ENCODE measurements at regions of chr3 and their contacts with region 1.

Region 1: GRCh38 chr3:192331749-192332385 is 395.5 kb downstream of the FGF12 start:
- DNase-seq: no peak
- ATAC-seq: no peak

Region 2: DNA sequence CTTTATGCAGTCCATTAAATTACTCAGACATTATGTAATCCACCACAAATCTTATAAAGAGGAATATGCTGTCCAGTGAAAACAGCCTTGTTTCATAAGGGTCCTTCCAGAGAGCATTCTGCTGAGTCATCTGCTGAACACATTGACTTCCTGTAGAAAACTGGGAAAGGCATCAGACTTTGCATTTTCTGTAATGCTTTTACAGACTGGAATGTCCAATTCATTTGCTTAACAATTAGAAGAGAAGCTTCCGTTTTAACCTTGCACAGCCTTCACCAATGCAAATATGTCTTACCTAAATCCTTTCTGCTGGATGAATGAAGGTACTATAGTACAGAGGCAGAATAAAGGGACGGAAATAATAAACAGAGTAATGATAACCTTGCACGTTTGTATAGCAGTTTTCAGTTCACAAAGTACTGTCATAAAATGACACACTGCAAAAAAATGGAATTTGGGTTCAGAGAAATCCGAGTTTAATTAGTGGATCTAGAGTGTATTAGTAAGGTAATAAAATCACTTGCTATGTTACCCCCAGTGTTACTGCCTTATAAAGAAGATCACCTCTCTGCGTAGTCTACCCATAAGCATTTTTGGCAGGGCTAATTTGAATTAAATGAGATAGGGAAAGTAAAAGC is 569.4 kb before region 1 on chr3:
- intact Hi-C with region 1: no loop called
- DNase-seq: no peak
- ATAC-seq: no peak

Region 3: DNA sequence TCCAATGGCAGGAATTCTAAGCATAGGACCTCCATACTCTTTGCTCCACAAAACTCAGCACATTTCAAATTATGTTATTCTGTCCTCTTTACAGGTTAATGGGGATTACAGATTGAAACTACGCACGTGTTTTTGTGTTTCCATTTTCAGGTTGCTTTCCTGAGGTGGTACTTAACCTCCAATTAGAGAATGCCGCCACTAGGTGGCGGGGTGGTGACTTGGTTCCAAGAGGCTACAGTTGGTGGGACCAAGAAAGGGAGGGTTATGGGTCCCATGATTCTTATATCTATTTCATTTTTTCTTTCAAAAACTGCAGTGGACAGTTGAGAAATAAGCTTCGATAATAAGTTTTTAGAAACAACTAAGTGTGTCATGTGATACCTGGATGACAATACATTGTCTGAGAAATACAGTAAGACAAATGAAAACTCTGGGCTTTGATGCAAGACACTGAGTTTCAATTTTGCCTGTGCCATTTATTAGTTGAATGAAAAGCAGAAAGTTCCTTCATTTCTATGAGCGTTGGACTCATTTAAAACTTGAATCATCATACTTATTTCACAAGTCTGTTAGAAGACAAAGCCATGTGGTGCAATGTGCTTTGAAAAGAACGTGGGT is 143.5 kb before region 1 on chr3:
- intact Hi-C with region 1: loop called (anchors 10 kb)
- DNase-seq: peak; percentile 73
- ATAC-seq: no peak

Measured in Right ventricle myocardium inferior (tissue), 1 donor.